Caco-2 (cell line): ENCODE measurements at regions of chr17 and their contacts with region 1.

Region 1: GRCh38 chr17:73998653-73999645 is 204.5 kb upstream of the RPL38 start:
- DNase-seq: peak; percentile 78 to 85
- H3K4me3 ChIP-seq: no peak overlapping the region
- H3K4me3 Mint-ChIP-seq: no peak overlapping the region
- H3K27ac Mint-ChIP-seq: no peak overlapping the region
- H3K4me1 ChIP-seq: no peaks in the 10 kb centered on the region
- H3K4me1 Mint-ChIP-seq: peaks cover 12% of the 10 kb centered on the region
- H3K27me3 ChIP-seq: no peaks in the 10 kb centered on the region
- H3K27me3 Mint-ChIP-seq: no peaks in the 10 kb centered on the region
- CTCF ChIP-seq: peak; percentile 85 to 96

Region 2: GRCh38 chr17:73936908-73937627 is 61.9 kb before region 1 on chr17:
- CTCF ChIA-PET with region 1: interaction called, 6 read pairs
- POLR2A ChIA-PET with region 1: no interaction called
- intact Hi-C with region 1: loop called (anchors 1 kb)
- DNase-seq: no peak
- H3K4me3 ChIP-seq: no peak overlapping the region
- H3K4me3 Mint-ChIP-seq: no peak overlapping the region
- H3K27ac Mint-ChIP-seq: no peak overlapping the region
- H3K4me1 ChIP-seq: no peaks in the 10 kb centered on the region
- H3K4me1 Mint-ChIP-seq: no peaks in the 10 kb centered on the region
- H3K27me3 ChIP-seq: no peaks in the 10 kb centered on the region
- H3K27me3 Mint-ChIP-seq: no peaks in the 10 kb centered on the region
- CTCF ChIP-seq: no peak

Region 3: GRCh38 chr17:73982871-73983270 is 16.1 kb before region 1 on chr17:
- CTCF ChIA-PET with region 1: no interaction called
- POLR2A ChIA-PET with region 1: no interaction called
- intact Hi-C with region 1: no loop called
- DNase-seq: no peak
- H3K4me3 ChIP-seq: no peak overlapping the region
- H3K4me3 Mint-ChIP-seq: no peak overlapping the region
- H3K27ac Mint-ChIP-seq: no peak overlapping the region
- H3K4me1 ChIP-seq: no peaks in the 10 kb centered on the region
- H3K4me1 Mint-ChIP-seq: no peaks in the 10 kb centered on the region
- H3K27me3 ChIP-seq: no peaks in the 10 kb centered on the region
- H3K27me3 Mint-ChIP-seq: no peaks in the 10 kb centered on the region
- CTCF ChIP-seq: no peak